Pancreas (tissue), 10 donors: ENCODE measurements at regions of chr21 and their contacts with region 1.

Region 1: DNA sequence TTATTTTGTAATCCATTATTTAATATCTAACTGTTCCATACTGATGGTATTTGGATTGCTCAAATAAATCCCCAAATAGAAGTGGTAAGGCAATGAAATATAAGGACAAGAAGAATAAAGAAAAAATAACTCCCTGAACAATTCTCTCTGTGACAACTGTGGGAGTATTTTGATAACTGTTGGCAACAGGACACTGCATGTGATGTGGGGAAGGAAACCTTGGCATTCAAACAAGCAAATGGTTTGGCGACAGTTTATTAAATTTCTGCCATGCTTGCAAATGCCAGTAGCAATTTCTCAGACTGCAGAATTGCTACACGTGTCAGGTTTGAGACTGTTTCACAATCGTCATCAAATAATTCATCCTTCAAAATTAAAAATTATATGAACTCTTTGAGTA is 8.6 kb upstream of the MRPL39 start:
- DNase-seq: no peak
- ATAC-seq: no peak
- H3K4me3 ChIP-seq: no peak overlapping the region
- H3K27ac ChIP-seq: no peak overlapping the region
- H3K4me1 ChIP-seq: no peaks in the 10 kb centered on the region
- H3K27me3 ChIP-seq: no peaks in the 10 kb centered on the region
- CTCF ChIP-seq: no peak

Region 2: GRCh38 chr21:25708467-25709065 is 92.7 kb after region 1 on chr21:
- intact Hi-C with region 1: loop called in 2 of 3 experiments (anchors 5 to 10 kb)
- DNase-seq: peak in 1 of 6 donors; percentile 26
- ATAC-seq: peak in 3 of 4 donors; percentile 46 to 53 (median 47)
- H3K4me3 ChIP-seq: no peak overlapping the region
- H3K27ac ChIP-seq: no peak overlapping the region
- H3K4me1 ChIP-seq: no peaks in the 10 kb centered on the region
- H3K27me3 ChIP-seq: no peaks in the 10 kb centered on the region
- CTCF ChIP-seq: peak; percentile 62 to 83 (median 72)

Region 3: GRCh38 chr21:25717491-25718147 is 101.7 kb after region 1 on chr21:
- intact Hi-C with region 1: loop called in 1 of 3 experiments (anchors 10 kb)
- DNase-seq: no peak
- ATAC-seq: peak in 1 of 4 donors; percentile 26
- H3K4me3 ChIP-seq: no peak overlapping the region
- H3K27ac ChIP-seq: no peak overlapping the region
- H3K4me1 ChIP-seq: no peaks in the 10 kb centered on the region
- H3K27me3 ChIP-seq: no peaks in the 10 kb centered on the region
- CTCF ChIP-seq: no peak